ENCODE measurements at regions of chr1 and their contacts with region 1.

Region 1: DNA sequence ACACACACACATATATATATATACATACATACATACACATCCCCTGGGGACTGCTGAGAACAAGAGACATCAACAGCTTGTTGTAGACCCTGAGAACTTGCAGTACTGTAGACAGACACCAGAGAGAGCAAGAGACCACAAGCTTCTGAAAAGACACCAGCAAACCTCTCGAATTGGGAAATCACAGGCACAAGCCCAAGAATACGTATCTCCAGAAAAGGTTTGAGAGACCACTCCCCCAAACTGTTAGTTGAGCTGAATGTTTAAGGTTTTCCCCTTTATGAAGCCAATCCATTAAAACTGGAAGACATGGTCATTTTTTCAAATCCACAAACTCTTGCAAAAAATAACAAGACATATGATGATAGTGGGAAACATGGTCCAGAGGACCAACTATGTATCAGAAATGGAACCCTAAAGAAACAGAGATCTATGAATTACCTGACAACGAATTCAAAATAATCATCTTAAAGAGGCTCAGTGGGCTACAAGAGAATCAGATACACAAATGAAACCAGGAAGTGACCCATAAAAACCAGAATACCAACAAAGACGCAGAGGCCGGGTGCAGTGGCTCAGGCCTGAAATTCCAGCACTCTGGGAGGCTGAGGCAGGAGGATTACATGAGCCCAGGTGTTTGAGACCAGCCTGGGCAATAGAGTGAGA is 45.1 kb downstream of the SLC2A1 start:
- DNase-seq: peak; percentile 35
- H3K4me3 ChIP-seq: no peak overlapping the region
- H3K27me3 ChIP-seq: no peaks in the 10 kb centered on the region
- CTCF ChIP-seq: peak; percentile 83

Region 2: GRCh38 chr1:42777852-42778251 is 135.7 kb before region 1 on chr1:
- CTCF ChIA-PET with region 1: interaction called, 19 read pairs
- POLR2A ChIA-PET with region 1: no interaction called
- DNase-seq: no peak
- H3K4me3 ChIP-seq: no peak overlapping the region
- H3K27me3 ChIP-seq: no peaks in the 10 kb centered on the region
- CTCF ChIP-seq: peak; percentile 79

Region 3: DNA sequence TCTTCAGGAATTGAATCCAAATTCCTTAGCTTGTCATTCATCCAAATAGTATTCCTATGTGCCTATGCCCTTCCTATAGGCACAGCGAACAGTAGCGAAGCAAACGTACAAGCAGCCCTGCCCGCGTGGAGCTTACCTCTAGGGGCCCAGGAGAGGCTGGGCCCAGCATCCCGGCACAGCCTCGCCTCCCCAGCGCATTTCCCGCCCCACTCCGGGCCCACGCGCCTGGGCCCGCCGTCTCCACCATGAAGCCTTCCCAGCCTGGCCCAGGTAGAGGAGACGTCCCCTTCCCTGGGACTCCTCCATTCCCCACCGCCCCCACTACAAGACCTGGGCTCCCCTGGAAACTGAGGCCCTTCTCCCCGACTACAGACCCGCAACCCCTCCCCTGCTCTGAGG is 129.0 kb before region 1 on chr1:
- CTCF ChIA-PET with region 1: interaction called, 14 read pairs
- POLR2A ChIA-PET with region 1: no interaction called
- DNase-seq: no peak
- H3K4me3 ChIP-seq: no peak overlapping the region
- H3K27me3 ChIP-seq: no peaks in the 10 kb centered on the region
- CTCF ChIP-seq: no peak

Region 4: GRCh38 chr1:42952303-42953001 is 38.9 kb after region 1 on chr1:
- CTCF ChIA-PET with region 1: no interaction called
- POLR2A ChIA-PET with region 1: no interaction called
- DNase-seq: no peak
- H3K4me3 ChIP-seq: no peak overlapping the region
- H3K27me3 ChIP-seq: no peaks in the 10 kb centered on the region
- CTCF ChIP-seq: no peak

Measured in BJ (cell line).